CD8-positive, alpha-beta T cell (primary cell): ENCODE measurements at regions of chr2 and their contacts with region 1.

Region 1: DNA sequence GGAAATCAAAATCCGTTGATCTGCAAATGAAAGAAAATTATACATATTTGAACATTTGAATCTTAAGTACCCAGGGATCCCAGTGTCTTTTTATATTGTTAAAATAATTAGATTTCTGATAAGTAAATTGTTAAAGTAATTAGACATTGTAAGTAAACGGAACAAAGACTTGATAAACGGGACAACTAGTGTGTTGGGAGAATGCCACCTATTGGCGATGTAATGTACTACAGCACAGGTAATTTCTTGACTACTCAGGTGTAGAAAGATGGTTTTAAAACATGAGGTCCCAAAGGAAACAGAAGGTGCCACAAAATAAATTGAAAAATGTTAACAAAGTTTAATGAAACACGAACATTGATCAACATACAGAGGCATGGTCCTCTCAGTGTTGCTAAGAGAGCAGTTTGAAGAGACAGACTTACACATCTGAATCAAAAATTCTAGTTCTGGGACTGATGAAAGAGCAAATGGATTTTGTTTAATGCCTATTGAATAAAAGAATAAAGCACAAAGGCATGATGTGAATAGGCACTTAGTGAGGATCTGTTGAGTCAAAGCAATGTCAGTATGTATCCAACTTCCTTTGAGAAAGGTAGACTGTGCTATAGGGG is 103.4 kb upstream of the RASGRP3 start:
- DNase-seq: peak in 3 of 9 experiments; percentile 16 to 64 (median 60)
- ATAC-seq: peak; percentile 38
- H3K4me3 ChIP-seq: no peak overlapping the region
- H3K4me3 Mint-ChIP-seq: no peak overlapping the region
- H3K27ac ChIP-seq: no peak overlapping the region
- H3K27ac Mint-ChIP-seq: no peak overlapping the region
- H3K4me1 ChIP-seq: no peaks in the 10 kb centered on the region
- H3K4me1 Mint-ChIP-seq: no peaks in the 10 kb centered on the region
- H3K27me3 ChIP-seq: peaks cover 0 to 3% of the 10 kb centered on the region in 2 experiments
- H3K27me3 Mint-ChIP-seq: no peaks in the 10 kb centered on the region
- CTCF ChIP-seq: peak; percentile 88

Region 2: DNA sequence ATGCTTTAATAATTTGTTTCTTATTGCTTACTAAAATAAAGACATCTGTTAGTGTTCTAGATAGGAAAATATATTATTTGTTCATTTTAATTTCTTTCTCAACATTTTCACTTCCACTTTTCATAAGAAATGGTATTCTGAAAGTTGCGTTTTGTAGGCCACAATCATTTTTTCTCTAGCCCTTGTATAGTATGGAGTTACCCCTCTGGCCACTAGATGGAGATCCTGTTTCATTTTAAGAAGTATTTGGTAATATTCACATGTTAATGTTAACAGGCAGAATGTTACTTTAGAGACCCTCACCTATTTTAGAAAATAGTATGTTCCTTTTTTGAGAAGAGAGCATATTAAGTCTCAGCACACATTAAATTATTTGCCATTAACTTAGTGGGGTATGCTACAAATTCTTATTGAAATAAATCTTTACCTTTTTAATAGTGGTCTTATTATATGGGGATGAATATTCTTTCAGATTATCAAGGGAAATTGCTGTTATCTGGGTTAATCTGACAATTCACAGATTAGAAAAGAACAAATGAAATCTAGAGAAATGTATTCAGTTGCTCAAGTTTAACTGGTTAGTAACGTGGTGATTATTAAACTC is 819.1 kb before region 1 on chr2:
- CTCF ChIA-PET with region 1: no interaction called
- POLR2A ChIA-PET with region 1: no interaction called
- intact Hi-C with region 1: loop called in 1 of 2 experiments (anchors 2 kb)
- DNase-seq: peak in 2 of 9 experiments; percentile 43 to 57
- ATAC-seq: peak; percentile 55
- H3K4me3 ChIP-seq: no peak overlapping the region
- H3K4me3 Mint-ChIP-seq: no peak overlapping the region
- H3K27ac ChIP-seq: no peak overlapping the region
- H3K27ac Mint-ChIP-seq: no peak overlapping the region
- H3K4me1 ChIP-seq: no peaks in the 10 kb centered on the region
- H3K4me1 Mint-ChIP-seq: no peaks in the 10 kb centered on the region
- H3K27me3 ChIP-seq: no peaks in the 10 kb centered on the region
- H3K27me3 Mint-ChIP-seq: no peaks in the 10 kb centered on the region
- CTCF ChIP-seq: peak; percentile 81

Region 3: DNA sequence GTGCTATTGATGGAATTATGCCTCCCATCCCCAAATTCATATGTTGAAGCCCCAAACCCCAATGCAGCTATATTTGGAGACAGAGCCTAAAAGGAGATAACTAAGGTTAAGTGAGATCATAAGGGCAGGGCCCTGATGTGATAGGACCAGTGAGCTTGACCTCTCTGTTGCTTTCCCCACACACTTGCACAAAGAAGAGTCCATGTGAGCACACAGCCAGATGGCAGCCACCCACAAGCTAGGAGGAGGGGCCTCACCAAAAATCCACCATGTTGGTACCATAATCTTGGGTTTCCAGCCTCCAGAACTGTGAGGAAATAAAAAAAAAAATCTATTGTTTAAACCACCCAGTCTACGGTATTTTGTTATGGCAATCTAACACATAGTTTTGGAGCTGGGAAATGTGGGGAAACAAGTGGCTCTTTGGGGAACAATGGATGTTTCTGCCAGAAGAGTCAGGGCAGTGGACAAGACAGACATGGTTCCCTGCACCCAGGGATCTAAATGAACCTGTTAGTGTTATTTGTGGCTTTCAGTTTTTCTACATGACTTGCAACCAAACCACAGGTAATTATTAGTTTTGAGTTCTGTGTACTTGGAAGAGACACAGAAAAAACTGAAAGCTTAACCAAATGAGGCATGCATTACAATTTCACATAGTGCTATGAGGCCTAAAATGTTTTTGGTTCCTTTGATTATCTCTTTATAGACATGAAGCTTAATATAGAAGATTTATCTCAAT is 167.2 kb before region 1 on chr2:
- CTCF ChIA-PET with region 1: no interaction called
- POLR2A ChIA-PET with region 1: no interaction called
- intact Hi-C with region 1: loop called in 1 of 2 experiments (anchors 10 kb)
- DNase-seq: no peak
- ATAC-seq: no peak
- H3K4me3 ChIP-seq: no peak overlapping the region
- H3K4me3 Mint-ChIP-seq: no peak overlapping the region
- H3K27ac ChIP-seq: no peak overlapping the region
- H3K27ac Mint-ChIP-seq: no peak overlapping the region
- H3K4me1 ChIP-seq: no peaks in the 10 kb centered on the region
- H3K4me1 Mint-ChIP-seq: no peaks in the 10 kb centered on the region
- H3K27me3 ChIP-seq: no peaks in the 10 kb centered on the region
- H3K27me3 Mint-ChIP-seq: no peaks in the 10 kb centered on the region
- CTCF ChIP-seq: no peak